ENCODE measurements at regions of chr4 and their contacts with region 1.

Region 1: GRCh38 chr4:180058731-180059215 is 2184.4 kb upstream of the TENM3 start:
- DNase-seq: peak; percentile 74
- H3K4me3 Mint-ChIP-seq: peak overlapping the region; percentile 74
- H3K27ac Mint-ChIP-seq: no peak overlapping the region
- H3K4me1 Mint-ChIP-seq: peaks cover 6% of the 10 kb centered on the region
- H3K27me3 Mint-ChIP-seq: peaks cover 39% of the 10 kb centered on the region
- CTCF ChIP-seq: no peak

Region 2: GRCh38 chr4:180084561-180084960 is 25.8 kb after region 1 on chr4:
- CTCF ChIA-PET with region 1: interaction called, 4 read pairs
- POLR2A ChIA-PET with region 1: interaction called, 12 read pairs
- intact Hi-C with region 1: no loop called
- DNase-seq: peak; percentile 42
- H3K4me3 Mint-ChIP-seq: no peak overlapping the region
- H3K27ac Mint-ChIP-seq: no peak overlapping the region
- H3K4me1 Mint-ChIP-seq: no peaks in the 10 kb centered on the region
- H3K27me3 Mint-ChIP-seq: peaks cover 54% of the 10 kb centered on the region
- CTCF ChIP-seq: no peak

Region 3: GRCh38 chr4:180150818-180151217 is 92.0 kb after region 1 on chr4:
- CTCF ChIA-PET with region 1: no interaction called
- POLR2A ChIA-PET with region 1: interaction called, 5 read pairs
- intact Hi-C with region 1: loop called (anchors 2 kb)
- DNase-seq: peak; percentile 22
- H3K4me3 Mint-ChIP-seq: no peak overlapping the region
- H3K27ac Mint-ChIP-seq: no peak overlapping the region
- H3K4me1 Mint-ChIP-seq: no peaks in the 10 kb centered on the region
- H3K27me3 Mint-ChIP-seq: no peaks in the 10 kb centered on the region
- CTCF ChIP-seq: peak; percentile 25

Region 4: GRCh38 chr4:180449395-180449956 is 390.7 kb after region 1 on chr4:
- CTCF ChIA-PET with region 1: no interaction called
- POLR2A ChIA-PET with region 1: no interaction called
- intact Hi-C with region 1: no loop called
- DNase-seq: peak; percentile 77
- H3K4me3 Mint-ChIP-seq: peak overlapping the region; percentile 19
- H3K27ac Mint-ChIP-seq: no peak overlapping the region
- H3K4me1 Mint-ChIP-seq: no peaks in the 10 kb centered on the region
- H3K27me3 Mint-ChIP-seq: no peaks in the 10 kb centered on the region
- CTCF ChIP-seq: peak; percentile 69

Region 5: GRCh38 chr4:180641495-180641894 is 582.7 kb after region 1 on chr4:
- CTCF ChIA-PET with region 1: interaction called, 4 read pairs
- POLR2A ChIA-PET with region 1: no interaction called
- intact Hi-C with region 1: loop called (anchors 5 kb)
- DNase-seq: peak; percentile 29
- H3K4me3 Mint-ChIP-seq: no peak overlapping the region
- H3K27ac Mint-ChIP-seq: no peak overlapping the region
- H3K4me1 Mint-ChIP-seq: no peaks in the 10 kb centered on the region
- H3K27me3 Mint-ChIP-seq: no peaks in the 10 kb centered on the region
- CTCF ChIP-seq: peak; percentile 13